Head of caudate nucleus (tissue), 42 donors: ENCODE measurements at regions of chr12 and their contacts with region 1.

Region 1: GRCh38 chr12:47715393-47715876 is 9.6 kb upstream of the RPAP3 start:
- DNase-seq: peak; percentile 76 to 97 (median 91)

Region 2: GRCh38 chr12:47758834-47759690 is 43.6 kb after region 1 on chr12 and contains the start of gene RAPGEF3:
- intact Hi-C with region 1: loop called (anchors 5 kb)
- DNase-seq: peak; percentile 73 to 95 (median 90)

Region 3: GRCh38 chr12:48279101-48279500 is 563.7 kb after region 1 on chr12:
- intact Hi-C with region 1: no loop called
- DNase-seq: peak in 1 of 42 donors; percentile 1